Right cardiac atrium (tissue), 5 donors: ENCODE measurements at regions of chr9 and their contacts with region 1.

Region 1: DNA sequence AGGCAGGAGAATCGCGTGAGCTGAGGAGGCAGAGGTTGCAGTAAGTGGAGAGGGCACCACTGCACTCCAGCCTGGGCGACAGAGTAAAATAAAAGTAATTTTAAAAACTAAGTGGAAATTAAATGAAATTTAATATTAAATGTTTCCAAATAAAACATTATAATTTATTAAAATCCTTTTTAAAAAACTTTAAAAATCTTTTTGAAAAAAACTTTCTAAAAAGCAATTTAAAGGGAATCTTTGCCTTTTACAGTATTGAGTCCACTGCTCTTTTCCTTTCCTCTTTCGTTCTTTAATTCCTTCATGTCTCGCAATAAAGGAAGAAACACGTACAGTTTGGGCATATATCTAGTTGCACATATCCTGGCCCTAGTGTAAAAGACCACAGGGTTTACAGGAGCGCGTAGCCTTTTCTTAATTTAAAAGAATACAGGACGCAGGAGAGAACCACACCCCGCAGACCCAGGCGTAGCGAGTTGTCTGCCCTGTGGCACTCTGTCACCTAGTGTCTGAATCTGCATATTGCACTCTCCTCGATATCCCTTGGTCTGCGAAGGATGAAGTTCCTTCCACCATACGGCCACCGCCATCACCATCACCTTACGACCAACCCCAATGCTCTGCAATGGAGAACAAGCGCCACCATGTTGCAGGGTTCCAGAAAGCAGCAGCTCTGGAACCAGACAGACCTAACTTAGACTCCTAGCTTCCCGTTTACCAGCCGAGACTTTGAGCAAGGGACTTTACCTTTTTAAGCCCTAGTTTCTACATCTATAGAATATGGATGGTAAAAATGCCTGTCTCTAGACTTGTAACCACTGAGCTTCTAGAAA is 77.6 kb upstream of the DMRT1 start:
- DNase-seq: peak; percentile 62 to 85 (median 81)
- ATAC-seq: peak; percentile 96 to 97
- H3K4me3 ChIP-seq: no peak overlapping the region
- H3K27ac ChIP-seq: no peak overlapping the region
- H3K4me1 ChIP-seq: no peaks in the 10 kb centered on the region
- H3K27me3 ChIP-seq: no peaks in the 10 kb centered on the region

Region 2: GRCh38 chr9:385818-386398 is 378.0 kb before region 1 on chr9:
- intact Hi-C with region 1: loop called in 1 of 4 experiments (anchors 10 kb)
- DNase-seq: peak in 2 of 3 donors; percentile 21 to 51
- ATAC-seq: peak; percentile 90 to 93
- H3K4me3 ChIP-seq: no peak overlapping the region
- H3K27ac ChIP-seq: no peak overlapping the region
- H3K4me1 ChIP-seq: no peaks in the 10 kb centered on the region
- H3K27me3 ChIP-seq: no peaks in the 10 kb centered on the region

Region 3: GRCh38 chr9:406886-407654 is 356.8 kb before region 1 on chr9:
- intact Hi-C with region 1: loop called in 3 of 4 experiments (anchors 2 to 10 kb)
- DNase-seq: no peak
- ATAC-seq: peak; percentile 67 to 84
- H3K4me3 ChIP-seq: no peak overlapping the region
- H3K27ac ChIP-seq: no peak overlapping the region
- H3K4me1 ChIP-seq: no peaks in the 10 kb centered on the region
- H3K27me3 ChIP-seq: no peaks in the 10 kb centered on the region

Region 4: GRCh38 chr9:613771-614347 is 150.0 kb before region 1 on chr9:
- intact Hi-C with region 1: loop called (anchors 5 kb)
- DNase-seq: peak; percentile 75 to 89 (median 83)
- ATAC-seq: peak; percentile 92 to 95
- H3K4me3 ChIP-seq: no peak overlapping the region
- H3K27ac ChIP-seq: peak overlapping the region; percentile 20
- H3K4me1 ChIP-seq: no peaks in the 10 kb centered on the region
- H3K27me3 ChIP-seq: no peaks in the 10 kb centered on the region

Region 5: DNA sequence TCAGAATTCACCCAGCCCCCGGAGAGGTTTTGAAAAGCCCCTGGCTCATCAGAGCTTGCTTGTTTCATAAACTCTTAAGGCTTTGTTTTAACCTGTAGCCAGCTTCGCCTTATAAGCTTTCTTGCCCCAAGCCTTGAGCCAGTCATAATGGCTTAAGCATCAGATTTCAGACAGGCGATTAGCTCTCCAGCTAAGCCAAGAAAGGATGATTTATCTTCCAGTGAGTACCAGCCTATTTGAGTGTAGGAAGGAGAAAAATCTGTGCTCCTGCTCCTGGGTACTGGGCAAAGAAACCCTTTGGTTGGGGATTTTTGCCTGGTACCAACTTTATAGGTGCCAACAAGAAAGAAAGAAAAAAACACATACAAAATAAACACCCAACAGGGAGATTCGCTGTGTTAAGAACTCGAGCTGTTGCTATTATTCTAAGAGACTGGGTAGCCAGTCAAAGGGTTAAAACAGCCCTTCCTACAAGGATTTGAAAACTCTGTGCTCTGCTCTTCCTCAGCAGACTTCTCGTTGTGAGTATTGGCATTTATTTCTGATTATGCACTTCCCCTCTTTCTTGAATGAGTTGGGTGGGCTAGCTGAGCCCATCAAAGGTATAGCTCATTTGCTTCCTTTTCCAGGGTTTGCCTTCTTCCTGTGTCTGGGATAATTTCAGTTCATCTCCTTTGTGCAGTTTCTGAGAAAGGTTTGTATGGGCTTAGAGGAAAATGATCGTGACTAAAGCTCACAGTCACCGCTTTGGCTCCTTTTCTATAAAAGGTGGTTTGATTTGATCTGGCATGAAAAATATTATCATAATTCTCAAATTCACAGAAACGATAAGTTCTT is 79.6 kb before region 1 on chr9:
- intact Hi-C with region 1: no loop called
- DNase-seq: no peak
- ATAC-seq: peak in 1 of 2 donors; percentile 51
- H3K4me3 ChIP-seq: no peak overlapping the region
- H3K27ac ChIP-seq: peak overlapping the region; percentile 67
- H3K4me1 ChIP-seq: peaks cover 15% of the 10 kb centered on the region
- H3K27me3 ChIP-seq: no peaks in the 10 kb centered on the region